Activated CD4-positive, alpha-beta T cell treated with anti-CD3 and anti-CD28 coated beads for 36 hours (primary cell): ENCODE measurements at regions of chr20 and their contacts with region 1.

Region 1: DNA sequence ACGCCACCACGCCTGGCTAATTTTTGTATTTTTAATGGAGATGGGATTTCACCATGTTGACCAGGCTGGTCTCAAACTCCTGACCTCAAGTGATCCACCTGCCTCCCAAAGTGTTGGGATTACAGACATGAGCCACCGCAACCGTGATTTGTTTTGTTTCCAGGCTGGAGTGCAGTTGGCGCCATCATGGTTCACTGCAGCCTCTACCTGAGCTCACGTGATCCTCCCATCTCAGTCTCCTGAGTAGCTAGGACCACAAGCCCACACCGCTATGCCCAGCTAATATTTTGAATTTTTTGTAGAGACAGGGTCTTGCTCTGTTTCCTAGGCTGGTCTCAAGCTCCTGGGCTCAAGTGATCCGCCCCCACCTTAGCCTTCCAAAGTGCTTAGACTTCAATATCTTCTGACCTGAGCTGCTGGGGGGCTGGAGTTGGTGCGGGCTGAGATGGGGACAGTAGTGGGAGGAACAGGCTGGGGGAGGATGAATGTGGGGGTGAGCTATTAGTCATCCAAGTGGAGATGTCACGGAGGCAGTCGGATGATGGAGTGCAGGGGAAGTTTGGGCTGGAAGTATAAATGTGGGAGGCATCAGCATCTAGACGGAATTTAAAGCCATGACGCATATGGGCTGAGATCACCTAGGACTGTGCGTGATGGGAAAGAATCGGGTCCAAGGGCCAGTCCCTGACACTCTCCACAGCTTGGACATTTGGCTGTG is 23.1 kb upstream of the ZMYND8 start:
- DNase-seq: no peak
- ATAC-seq: no peak
- H3K4me3 Mint-ChIP-seq: no peak overlapping the region
- H3K27ac Mint-ChIP-seq: no peak overlapping the region
- H3K4me1 Mint-ChIP-seq: peaks cover 18% of the 10 kb centered on the region
- H3K27me3 Mint-ChIP-seq: peaks cover 2% of the 10 kb centered on the region

Region 2: DNA sequence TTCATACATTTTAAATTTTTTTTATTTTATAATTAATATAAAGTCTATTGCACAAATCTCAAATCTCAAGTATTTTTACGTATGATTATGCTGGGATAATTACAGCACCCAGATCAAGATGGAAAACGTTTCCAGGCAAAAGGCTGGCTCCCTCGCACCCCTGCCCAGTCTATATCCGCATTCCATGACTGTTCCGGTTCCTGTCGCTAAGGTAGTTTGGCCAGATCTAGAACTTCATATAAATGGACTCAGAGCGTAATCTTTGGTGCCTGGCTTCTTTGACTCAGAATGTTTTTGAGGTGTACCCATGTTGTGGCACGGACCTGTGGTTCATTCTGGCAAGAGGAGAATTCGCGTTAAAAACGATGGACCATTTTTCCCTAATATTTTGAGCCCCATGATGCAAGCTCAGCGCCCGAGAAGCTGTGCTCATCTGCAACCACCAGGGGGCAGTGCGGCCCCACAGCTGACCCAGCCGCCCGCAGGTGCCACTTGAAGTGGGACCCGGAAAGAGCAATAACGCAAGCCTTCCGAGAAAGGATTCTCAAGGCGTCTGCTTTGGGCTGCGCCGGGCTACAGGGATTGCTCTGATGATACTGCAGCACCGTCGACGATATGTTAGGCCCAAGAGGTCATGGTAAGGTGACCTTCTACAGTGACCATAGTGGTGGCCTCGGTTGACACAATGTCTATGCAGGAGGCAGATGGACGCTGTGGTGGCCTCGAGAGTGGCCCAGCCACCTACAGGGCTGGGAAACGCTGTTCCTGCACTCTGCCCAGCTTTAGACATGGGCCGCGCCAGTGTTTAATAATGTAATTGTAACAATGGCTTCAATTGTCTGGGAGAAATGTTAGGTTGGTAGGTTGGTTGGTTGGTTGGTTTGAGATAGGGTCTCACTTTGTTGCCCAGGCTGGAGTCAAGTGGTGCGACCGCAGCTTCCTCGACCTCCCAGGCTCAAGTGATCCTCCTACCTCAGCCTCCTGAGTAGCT is 183.2 kb before region 1 on chr20:
- CTCF ChIA-PET with region 1: interaction called, 40 read pairs
- POLR2A ChIA-PET with region 1: no interaction called
- intact Hi-C with region 1: loop called (anchors 1 kb)
- DNase-seq: peak; percentile 91
- ATAC-seq: peak; percentile 57
- H3K4me3 Mint-ChIP-seq: no peak overlapping the region
- H3K27ac Mint-ChIP-seq: no peak overlapping the region
- H3K4me1 Mint-ChIP-seq: peaks cover 16% of the 10 kb centered on the region
- H3K27me3 Mint-ChIP-seq: peaks cover 8% of the 10 kb centered on the region

Region 3: DNA sequence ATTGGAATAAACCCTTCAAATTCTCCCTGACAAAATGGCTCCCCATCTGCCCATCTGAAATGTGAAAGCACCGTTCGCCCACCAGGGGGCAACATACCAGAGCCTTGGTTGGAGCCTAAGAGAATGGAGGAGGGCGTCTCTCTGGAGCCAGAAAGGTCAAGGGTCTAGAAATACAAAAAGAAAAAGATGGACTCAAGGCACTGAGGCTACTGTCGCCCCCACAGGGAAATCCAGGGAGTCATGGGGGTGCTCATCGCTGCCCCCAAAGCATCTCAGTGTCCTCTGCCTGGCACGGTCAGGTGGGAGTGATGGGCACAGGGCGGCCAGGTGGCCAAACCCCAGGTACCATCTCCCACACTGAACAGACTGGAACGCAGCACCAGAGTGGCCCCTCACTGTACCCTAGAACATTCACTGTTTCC is 159.4 kb before region 1 on chr20:
- CTCF ChIA-PET with region 1: interaction called, 15 read pairs
- POLR2A ChIA-PET with region 1: no interaction called
- intact Hi-C with region 1: loop called in 1 of 2 experiments (anchors 1 kb)
- DNase-seq: peak; percentile 75
- ATAC-seq: peak; percentile 47
- H3K4me3 Mint-ChIP-seq: no peak overlapping the region
- H3K27ac Mint-ChIP-seq: peak overlapping the region; percentile 37
- H3K4me1 Mint-ChIP-seq: no peaks in the 10 kb centered on the region
- H3K27me3 Mint-ChIP-seq: no peaks in the 10 kb centered on the region

Region 4: GRCh38 chr20:47317127-47317895 is 62.3 kb before region 1 on chr20:
- CTCF ChIA-PET with region 1: interaction called, 16 read pairs
- POLR2A ChIA-PET with region 1: interaction called, 4 read pairs
- intact Hi-C with region 1: no loop called
- DNase-seq: peak; percentile 81
- ATAC-seq: peak; percentile 84
- H3K4me3 Mint-ChIP-seq: no peak overlapping the region
- H3K27ac Mint-ChIP-seq: peak overlapping the region; percentile 90
- H3K4me1 Mint-ChIP-seq: peaks cover 61% of the 10 kb centered on the region
- H3K27me3 Mint-ChIP-seq: no peaks in the 10 kb centered on the region

Region 5: DNA sequence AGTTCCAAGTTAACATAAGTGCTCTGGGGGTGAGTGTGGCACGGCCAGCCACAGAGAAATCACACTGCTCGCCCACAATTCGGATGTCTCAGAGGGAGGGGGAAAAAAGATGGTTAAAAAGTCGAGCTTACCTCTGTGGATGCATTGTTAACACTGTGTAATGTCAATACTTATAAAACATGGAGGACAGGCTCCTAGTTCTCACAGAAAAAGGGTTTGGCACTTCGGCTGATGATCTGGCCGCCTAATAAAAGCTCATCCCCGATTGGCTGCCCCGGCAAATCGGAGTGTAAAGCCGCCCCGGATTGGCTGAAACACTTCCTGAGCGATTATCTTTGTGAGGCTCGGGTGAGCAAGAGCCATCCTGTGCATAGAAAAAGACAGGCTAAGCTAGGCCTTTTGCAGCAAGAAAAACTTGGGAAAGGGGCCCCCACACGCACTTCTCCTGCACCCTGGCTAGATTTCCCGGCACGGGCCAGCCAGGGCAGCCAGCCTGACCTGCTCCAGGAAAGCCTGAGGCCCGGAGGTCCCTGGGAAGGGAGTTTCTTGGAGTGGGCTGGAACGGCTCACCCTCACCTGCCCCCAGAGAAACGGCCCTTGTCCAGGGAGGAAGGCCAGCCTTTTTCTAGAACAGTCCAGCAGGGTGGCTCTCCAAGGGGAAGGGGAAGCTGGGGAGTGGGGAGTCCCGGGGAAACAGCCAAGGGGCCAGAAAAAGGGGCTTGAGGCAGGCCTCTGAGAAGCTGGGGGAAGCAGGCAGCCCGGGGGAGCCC is 22.9 kb before region 1 on chr20 and contains the start of gene ZMYND8:
- CTCF ChIA-PET with region 1: interaction called, 64 read pairs
- POLR2A ChIA-PET with region 1: no interaction called
- intact Hi-C with region 1: no loop called
- DNase-seq: peak; percentile 94
- ATAC-seq: peak; percentile 85
- H3K4me3 Mint-ChIP-seq: peak within 1 kb of the TSS; percentile 77
- H3K27ac Mint-ChIP-seq: peak within 1 kb of the TSS; percentile 98
- H3K4me1 Mint-ChIP-seq: peaks cover 54% of the 10 kb centered on the region
- H3K27me3 Mint-ChIP-seq: no peaks in the 10 kb centered on the region
- total RNA-seq, gene ZMYND8: 33.7 to 50.3 TPM

Region 6: DNA sequence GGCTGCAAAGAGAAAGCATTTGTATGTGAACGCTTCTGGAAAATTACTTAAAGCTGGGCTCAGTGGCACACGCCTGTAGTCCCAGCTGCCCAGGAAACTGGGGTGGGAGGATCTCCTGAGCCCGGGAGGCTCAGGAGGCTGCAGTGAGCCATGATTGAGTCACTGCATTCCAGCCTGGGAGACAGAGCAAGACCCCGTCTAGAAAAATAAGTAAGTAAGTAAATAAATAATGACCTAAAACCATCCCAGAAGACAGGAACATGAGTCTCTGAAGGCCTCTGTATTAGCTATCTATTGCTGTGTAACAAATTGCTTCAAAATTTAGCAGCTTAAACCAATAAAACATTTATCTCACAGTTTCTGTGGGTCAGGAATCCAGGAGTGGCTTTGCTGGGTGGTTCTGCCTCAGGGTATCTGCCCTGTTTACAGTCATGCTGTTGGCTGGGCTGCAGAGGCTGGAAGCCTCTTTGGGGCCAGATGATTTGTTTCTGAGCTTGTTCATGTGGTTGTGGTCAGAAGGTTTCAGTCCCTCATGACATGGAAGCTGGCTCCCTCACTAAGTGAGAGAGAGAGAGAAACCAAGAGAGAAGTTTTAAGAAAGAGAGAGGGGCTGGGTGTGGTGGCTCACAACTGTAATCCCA is 73.7 kb after region 1 on chr20:
- CTCF ChIA-PET with region 1: interaction called, 11 read pairs
- POLR2A ChIA-PET with region 1: no interaction called
- intact Hi-C with region 1: no loop called
- DNase-seq: peak; percentile 74
- ATAC-seq: peak; percentile 84
- H3K4me3 Mint-ChIP-seq: no peak overlapping the region
- H3K27ac Mint-ChIP-seq: peak overlapping the region; percentile 73
- H3K4me1 Mint-ChIP-seq: peaks cover 38% of the 10 kb centered on the region
- H3K27me3 Mint-ChIP-seq: no peaks in the 10 kb centered on the region

Region 7: GRCh38 chr20:47635256-47635655 is 255.7 kb after region 1 on chr20:
- CTCF ChIA-PET with region 1: interaction called, 10 read pairs
- POLR2A ChIA-PET with region 1: no interaction called
- intact Hi-C with region 1: no loop called
- DNase-seq: no peak
- ATAC-seq: no peak
- H3K4me3 Mint-ChIP-seq: no peak overlapping the region
- H3K27ac Mint-ChIP-seq: no peak overlapping the region
- H3K4me1 Mint-ChIP-seq: no peaks in the 10 kb centered on the region
- H3K27me3 Mint-ChIP-seq: no peaks in the 10 kb centered on the region